Activated CD4-positive, alpha-beta memory T cell treated with anti-CD3 and anti-CD28 coated beads, Interleukin-2, amount 10 ng/mL, durations not matched to agents 7 days and 5 days (primary cell): ENCODE measurements at regions of chr1 and their contacts with region 1.

Region 1: DNA sequence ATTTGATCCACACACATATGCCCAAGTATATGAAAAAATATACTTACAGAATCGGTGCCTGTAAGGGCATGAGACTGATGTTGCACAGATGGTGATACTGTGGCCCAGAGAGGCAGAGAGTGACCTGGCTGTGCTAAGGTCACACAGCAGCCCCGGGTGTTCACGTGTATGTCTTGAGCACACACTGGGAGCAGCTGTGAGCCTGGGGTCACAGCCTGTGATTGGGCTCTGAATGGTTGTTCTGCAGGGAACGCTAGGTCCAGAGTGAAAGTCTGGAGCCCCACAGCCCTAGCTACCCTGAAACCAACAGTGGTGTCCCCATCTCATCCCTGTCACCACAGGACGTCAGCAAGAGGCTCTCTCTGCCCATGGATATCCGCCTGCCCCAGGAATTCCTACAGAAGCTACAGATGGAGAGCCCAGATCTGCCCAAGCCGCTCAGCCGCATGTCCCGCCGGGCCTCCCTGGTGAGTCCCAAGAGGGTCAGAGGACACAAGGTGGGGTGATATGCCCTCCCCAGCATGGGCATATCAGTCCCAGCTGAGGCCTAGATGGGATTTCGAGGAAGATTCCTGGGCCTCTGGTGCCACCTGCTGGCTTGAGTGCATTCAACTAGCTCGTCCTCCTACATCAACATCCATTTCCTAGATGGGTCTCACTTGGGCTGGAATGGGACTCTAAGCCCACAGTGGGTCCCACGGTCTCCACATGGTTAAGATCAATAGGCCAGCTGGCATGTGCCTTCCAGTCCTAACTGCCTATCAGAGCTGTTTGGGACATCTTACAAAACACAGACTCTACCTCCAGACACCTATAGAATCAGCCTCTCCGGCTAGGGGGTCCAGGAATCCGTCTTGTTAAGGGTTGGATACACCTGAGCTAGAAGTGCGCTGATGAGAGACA is 19.7 kb downstream of the CDK18 start:
- DNase-seq: peak; percentile 76
- H3K4me3 Mint-ChIP-seq: no peak overlapping the region
- H3K27ac Mint-ChIP-seq: no peak overlapping the region
- H3K4me1 Mint-ChIP-seq: no peaks in the 10 kb centered on the region
- H3K27me3 Mint-ChIP-seq: no peaks in the 10 kb centered on the region

Region 2: GRCh38 chr1:205321164-205321958 is 202.8 kb before region 1 on chr1 and contains the start of gene NUAK2:
- CTCF ChIA-PET with region 1: interaction called, 12 read pairs
- POLR2A ChIA-PET with region 1: no interaction called
- DNase-seq: peak; percentile 80
- H3K4me3 Mint-ChIP-seq: peak within 1 kb of the TSS; percentile 86
- H3K27ac Mint-ChIP-seq: peak within 1 kb of the TSS; percentile 71
- H3K4me1 Mint-ChIP-seq: peaks cover 54% of the 10 kb centered on the region
- H3K27me3 Mint-ChIP-seq: peaks cover 22% of the 10 kb centered on the region
- total RNA-seq, gene NUAK2: 12.4 to 13.0 TPM

Region 3: DNA sequence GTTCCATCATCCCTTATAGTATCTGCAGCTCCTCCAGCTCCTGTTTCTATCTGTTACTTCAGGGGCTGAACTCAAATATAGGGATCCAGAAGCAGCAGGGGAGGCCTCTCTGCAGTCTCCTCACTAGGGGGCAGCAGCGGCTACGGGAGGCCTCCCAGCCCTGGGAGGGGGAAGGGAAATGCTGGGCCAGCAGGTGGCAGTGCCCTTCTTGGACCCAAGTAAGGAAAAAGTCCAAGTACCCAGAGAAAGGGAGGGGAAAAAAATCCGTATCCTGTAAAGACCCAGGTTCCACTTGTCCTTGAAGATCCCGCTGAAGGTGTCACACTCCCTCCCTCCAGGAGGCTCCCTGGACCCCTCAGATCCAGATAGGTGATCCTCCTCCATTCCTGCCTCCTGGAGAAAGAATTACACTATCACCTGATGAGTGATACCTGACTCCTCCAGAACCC is 188.5 kb before region 1 on chr1:
- CTCF ChIA-PET with region 1: interaction called, 19 read pairs
- POLR2A ChIA-PET with region 1: no interaction called
- DNase-seq: peak; percentile 83
- H3K4me3 Mint-ChIP-seq: no peak overlapping the region
- H3K27ac Mint-ChIP-seq: no peak overlapping the region
- H3K4me1 Mint-ChIP-seq: peaks cover 6% of the 10 kb centered on the region
- H3K27me3 Mint-ChIP-seq: peaks cover 33% of the 10 kb centered on the region

Region 4: DNA sequence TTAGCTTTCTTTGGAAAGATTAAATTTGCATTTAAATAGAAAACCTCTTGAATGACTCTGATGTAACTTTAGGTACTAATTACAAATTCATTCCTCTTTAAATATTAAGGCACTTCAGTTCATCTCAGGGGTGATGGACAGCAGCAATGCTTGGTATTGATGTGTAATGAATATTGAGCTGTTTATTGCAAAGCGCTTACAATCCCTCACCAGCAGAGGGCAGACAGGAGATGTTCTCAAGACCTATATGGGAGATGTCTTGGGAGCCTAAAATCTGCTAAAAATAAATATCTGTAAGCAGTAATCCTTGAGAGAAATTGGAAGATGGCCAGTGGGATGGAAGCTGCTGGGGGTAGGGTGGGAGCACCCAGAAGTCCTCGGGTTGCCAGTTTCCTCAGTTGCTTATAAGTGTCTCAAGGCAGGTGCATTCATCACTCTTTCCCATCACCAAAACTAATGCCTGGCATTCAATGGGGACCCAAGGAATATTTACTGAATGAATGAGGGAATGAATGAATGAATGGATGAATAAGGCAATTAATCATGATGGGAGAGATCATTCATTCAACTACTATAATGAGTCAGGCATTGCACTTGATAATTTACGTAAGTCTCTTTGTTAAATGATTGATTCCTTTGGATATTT is 169.8 kb before region 1 on chr1:
- CTCF ChIA-PET with region 1: interaction called, 64 read pairs
- POLR2A ChIA-PET with region 1: no interaction called
- DNase-seq: peak; percentile 67
- H3K4me3 Mint-ChIP-seq: no peak overlapping the region
- H3K27ac Mint-ChIP-seq: no peak overlapping the region
- H3K4me1 Mint-ChIP-seq: no peaks in the 10 kb centered on the region
- H3K27me3 Mint-ChIP-seq: peaks cover 21% of the 10 kb centered on the region

Region 5: GRCh38 chr1:205396967-205397616 is 127.0 kb before region 1 on chr1:
- CTCF ChIA-PET with region 1: interaction called, 49 read pairs
- POLR2A ChIA-PET with region 1: no interaction called
- DNase-seq: no peak
- H3K4me3 Mint-ChIP-seq: no peak overlapping the region
- H3K27ac Mint-ChIP-seq: no peak overlapping the region
- H3K4me1 Mint-ChIP-seq: no peaks in the 10 kb centered on the region
- H3K27me3 Mint-ChIP-seq: peaks cover 30% of the 10 kb centered on the region